ENCODE measurements at regions of chr20 and their contacts with region 1.

Region 1: DNA sequence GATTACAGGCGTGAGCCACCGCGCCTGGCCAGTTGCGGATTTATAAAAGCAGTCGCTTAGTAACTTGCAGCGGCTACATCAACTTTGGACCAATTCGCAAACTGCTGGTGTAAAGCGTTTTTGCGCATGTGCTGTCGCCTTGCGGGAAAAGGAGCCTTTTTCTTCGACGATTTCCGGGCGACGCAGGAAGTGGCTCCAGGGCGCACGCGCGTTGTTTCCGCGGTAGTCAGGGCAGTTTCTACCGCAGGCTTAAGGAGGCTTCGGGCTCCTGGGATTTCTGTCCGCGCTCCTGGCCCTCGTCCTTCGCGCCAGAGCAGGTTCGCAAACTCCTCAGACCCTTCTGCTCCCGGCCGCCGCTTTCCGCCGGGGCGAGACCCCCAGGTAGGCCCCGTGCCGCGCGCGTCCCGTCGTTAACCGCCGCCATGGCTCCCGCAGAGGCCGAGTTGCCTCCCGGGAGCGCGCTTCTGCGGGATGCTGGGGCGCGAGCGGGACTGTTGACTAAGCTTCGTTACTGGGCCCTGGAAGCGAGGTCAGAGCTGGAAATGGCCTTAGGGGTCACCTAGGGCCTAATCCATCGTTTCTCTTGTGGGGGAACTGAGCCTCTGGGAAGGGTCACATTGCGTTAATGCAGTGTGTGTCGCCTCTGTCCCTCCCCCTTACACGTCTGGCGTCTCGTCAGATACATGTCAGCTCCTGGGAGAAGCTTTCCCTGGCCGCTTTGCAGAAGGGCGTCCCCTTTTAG is at the start of gene RAE1:
- DNase-seq: peak; percentile 89
- H3K4me3 Mint-ChIP-seq: peak within 1 kb of the TSS; percentile 96
- H3K27ac Mint-ChIP-seq: peak within 1 kb of the TSS; percentile 89
- H3K4me1 Mint-ChIP-seq: peaks cover 32% of the 10 kb centered on the region
- H3K27me3 Mint-ChIP-seq: peaks cover 2% of the 10 kb centered on the region
- total RNA-seq, gene RAE1: 54.4 and 59.2 TPM in 2 replicates

Region 2: GRCh38 chr20:56392282-56393137 is 958.7 kb before region 1 on chr20 and contains the start of gene CSTF1:
- intact Hi-C with region 1: loop called (anchors 1 kb)
- DNase-seq: peak; percentile 99
- H3K4me3 Mint-ChIP-seq: no peak within 1 kb of the TSS
- H3K27ac Mint-ChIP-seq: no peak within 1 kb of the TSS
- H3K4me1 Mint-ChIP-seq: peaks cover 49% of the 10 kb centered on the region
- H3K27me3 Mint-ChIP-seq: no peaks in the 10 kb centered on the region
- total RNA-seq, gene CSTF1: 55.2 and 60.9 TPM in 2 replicates

Region 3: GRCh38 chr20:56554869-56555268 is 796.3 kb before region 1 on chr20:
- intact Hi-C with region 1: loop called (anchors 1 kb)
- DNase-seq: no peak
- H3K4me3 Mint-ChIP-seq: no peak overlapping the region
- H3K27ac Mint-ChIP-seq: peak overlapping the region; percentile 24
- H3K4me1 Mint-ChIP-seq: peaks cover 9% of the 10 kb centered on the region
- H3K27me3 Mint-ChIP-seq: peaks cover 5% of the 10 kb centered on the region

Region 4: DNA sequence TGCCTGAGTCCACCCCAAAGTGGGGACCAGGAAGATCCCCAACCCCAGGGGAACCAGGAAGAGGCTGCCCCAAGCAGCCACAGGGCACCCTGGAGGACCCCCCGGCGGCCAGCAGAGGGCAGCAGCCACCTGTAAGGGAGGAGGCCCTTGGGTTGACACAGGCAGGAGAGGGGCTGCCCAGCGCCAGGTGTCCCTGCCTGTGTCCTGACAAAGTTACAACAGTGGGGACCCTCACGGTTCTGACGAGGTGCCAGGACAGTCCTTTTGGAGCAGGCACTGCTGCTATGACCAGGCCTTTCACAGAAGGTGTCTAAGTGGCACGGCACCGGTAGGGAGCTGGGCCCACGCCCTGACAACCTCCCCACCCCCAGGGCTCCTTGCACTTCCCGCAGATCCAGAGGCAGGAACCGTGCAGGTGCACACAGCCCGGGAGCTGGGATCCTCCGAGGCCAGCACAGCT is 261.5 kb before region 1 on chr20:
- intact Hi-C with region 1: loop called (anchors 1 kb)
- DNase-seq: peak; percentile 38
- H3K4me3 Mint-ChIP-seq: no peak overlapping the region
- H3K27ac Mint-ChIP-seq: peak overlapping the region; percentile 76
- H3K4me1 Mint-ChIP-seq: peaks cover 20% of the 10 kb centered on the region
- H3K27me3 Mint-ChIP-seq: peaks cover 11% of the 10 kb centered on the region

Region 5: GRCh38 chr20:57223648-57224489 is 127.3 kb before region 1 on chr20:
- intact Hi-C with region 1: loop called (anchors 1 kb)
- DNase-seq: no peak
- H3K4me3 Mint-ChIP-seq: no peak overlapping the region
- H3K27ac Mint-ChIP-seq: no peak overlapping the region
- H3K4me1 Mint-ChIP-seq: no peaks in the 10 kb centered on the region
- H3K27me3 Mint-ChIP-seq: no peaks in the 10 kb centered on the region

Region 6: GRCh38 chr20:57709931-57710799 is 359.0 kb after region 1 on chr20 and contains the start of gene PMEPA1:
- intact Hi-C with region 1: loop called (anchors 2 kb)
- DNase-seq: peak; percentile 79
- H3K4me3 Mint-ChIP-seq: peak within 1 kb of the TSS; percentile 87
- H3K27ac Mint-ChIP-seq: peak within 1 kb of the TSS; percentile 77
- H3K4me1 Mint-ChIP-seq: peaks cover 15% of the 10 kb centered on the region
- H3K27me3 Mint-ChIP-seq: peaks cover 39% of the 10 kb centered on the region
- total RNA-seq, gene PMEPA1: 0.57 and 0.66 TPM in 2 replicates

Region 7: DNA sequence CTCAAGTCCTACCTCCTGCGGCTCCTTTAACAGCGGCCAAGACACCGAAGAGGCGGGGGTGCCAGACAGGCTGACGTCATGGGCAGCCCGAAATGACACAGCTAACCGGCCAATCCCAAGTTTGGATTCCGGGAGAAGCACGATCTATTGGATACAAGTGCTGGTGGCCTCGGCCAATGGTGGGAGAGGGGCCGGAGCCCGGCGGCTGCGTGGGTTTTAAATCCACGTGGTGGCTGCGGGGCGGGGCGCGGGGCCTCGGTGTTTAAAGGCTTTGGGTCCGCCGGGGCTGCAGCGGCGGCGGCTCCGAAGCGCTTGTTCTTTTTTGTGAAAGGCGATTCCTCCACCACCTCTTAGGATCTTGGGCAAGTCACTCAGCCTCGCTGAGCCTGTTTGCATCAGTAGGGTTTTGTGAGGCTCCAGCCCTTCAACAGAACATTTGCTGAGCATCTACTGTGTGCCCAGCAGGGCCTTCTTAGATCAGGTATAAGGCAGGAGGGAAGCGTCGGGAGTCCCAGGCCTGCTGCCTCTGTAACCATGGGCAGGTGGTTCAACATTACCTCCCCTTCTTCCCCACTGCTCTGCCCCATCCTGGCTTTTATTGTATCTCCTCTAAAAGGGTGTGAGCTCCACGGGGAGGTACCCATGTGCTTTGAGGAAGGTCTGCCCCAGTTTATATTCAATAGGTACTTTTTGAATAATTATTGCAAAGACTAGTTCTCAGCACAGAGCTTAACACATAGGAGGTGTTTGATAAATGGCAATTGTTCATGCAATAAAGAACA is 367.5 kb after region 1 on chr20:
- intact Hi-C with region 1: loop called (anchors 1 kb)
- DNase-seq: peak; percentile 78
- H3K4me3 Mint-ChIP-seq: peak overlapping the region; percentile 22
- H3K27ac Mint-ChIP-seq: no peak overlapping the region
- H3K4me1 Mint-ChIP-seq: no peaks in the 10 kb centered on the region
- H3K27me3 Mint-ChIP-seq: peaks cover 23% of the 10 kb centered on the region

Measured in activated T-helper 1 cell treated with anti-CD3 and anti-CD28 coated beads, Interleukin-12 subunit alpha, Interleukin-12 subunit beta, Interleukin-2, Interleukin-4 antibody, amounts not matched to agents 30 ng/mL and 10 ng/mL and 1 ng/mL, durations not matched to agents 14 hours and 24 hours and 36 hours (primary cell).